ENCODE measurements at regions of chr11 and their contacts with region 1.

Region 1: DNA sequence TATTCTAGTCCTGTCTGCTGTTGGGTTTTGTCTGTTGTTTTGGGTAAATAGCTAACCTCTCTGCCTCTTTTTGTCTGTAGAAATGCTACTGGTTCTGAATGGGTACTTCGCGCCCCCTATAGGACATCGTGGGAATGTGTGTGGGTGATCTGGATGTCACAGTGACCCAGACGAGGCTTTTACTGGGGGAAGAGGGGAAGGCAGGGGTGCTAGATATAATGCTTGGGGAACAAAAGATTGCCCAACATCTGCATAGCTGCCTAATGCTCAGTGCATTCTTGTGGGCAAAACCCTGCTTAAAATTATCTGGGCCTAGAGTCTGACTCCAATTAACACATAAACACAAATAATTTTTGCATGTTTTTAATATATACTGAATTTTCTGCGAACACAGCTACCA is 57.7 kb downstream of the BMAL1 start:
- DNase-seq: peak; percentile 83
- ATAC-seq: peak; percentile 54
- H3K4me3 Mint-ChIP-seq: no peak overlapping the region
- H3K27ac Mint-ChIP-seq: no peak overlapping the region
- H3K4me1 Mint-ChIP-seq: peaks cover 71% of the 10 kb centered on the region
- H3K27me3 Mint-ChIP-seq: no peaks in the 10 kb centered on the region

Region 2: DNA sequence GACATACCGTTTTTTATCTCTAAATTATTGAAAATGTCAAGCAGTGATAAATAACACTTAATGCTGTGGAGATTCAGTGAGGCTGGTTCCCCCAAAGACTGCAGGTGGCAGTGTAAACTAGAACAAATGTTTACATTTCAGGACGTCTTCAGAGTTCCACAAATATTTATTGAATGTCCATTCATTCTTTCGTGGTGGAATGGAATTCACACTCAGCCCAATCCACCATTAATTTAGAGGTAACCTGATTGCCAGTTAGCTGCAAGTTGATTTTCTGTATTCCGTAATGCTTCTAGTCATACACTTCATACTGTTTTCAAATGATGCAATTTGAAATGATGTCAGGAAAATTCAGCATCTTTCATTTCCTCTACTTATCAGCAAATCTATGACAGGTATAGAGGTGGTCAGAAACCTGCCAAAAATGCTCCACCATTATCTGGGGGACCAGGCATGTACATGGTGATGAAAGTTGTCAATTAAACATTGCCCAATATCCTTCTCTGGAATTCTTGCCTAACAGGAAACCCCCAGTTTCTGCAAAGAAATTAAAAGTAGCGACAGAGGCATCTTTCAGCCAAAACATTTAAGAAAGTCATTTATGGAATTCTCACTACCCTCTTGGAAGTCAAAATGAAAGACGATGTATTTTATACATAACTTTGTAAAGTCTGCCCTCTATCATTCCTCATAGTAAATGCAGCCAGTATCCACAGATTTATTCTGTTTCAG is 152.1 kb before region 1 on chr11:
- CTCF ChIA-PET with region 1: interaction called, 17 read pairs
- POLR2A ChIA-PET with region 1: no interaction called
- DNase-seq: peak; percentile 37
- ATAC-seq: no peak
- H3K4me3 Mint-ChIP-seq: peak overlapping the region; percentile 17
- H3K27ac Mint-ChIP-seq: no peak overlapping the region
- H3K4me1 Mint-ChIP-seq: peaks cover 5% of the 10 kb centered on the region
- H3K27me3 Mint-ChIP-seq: peaks cover 14% of the 10 kb centered on the region

Region 3: DNA sequence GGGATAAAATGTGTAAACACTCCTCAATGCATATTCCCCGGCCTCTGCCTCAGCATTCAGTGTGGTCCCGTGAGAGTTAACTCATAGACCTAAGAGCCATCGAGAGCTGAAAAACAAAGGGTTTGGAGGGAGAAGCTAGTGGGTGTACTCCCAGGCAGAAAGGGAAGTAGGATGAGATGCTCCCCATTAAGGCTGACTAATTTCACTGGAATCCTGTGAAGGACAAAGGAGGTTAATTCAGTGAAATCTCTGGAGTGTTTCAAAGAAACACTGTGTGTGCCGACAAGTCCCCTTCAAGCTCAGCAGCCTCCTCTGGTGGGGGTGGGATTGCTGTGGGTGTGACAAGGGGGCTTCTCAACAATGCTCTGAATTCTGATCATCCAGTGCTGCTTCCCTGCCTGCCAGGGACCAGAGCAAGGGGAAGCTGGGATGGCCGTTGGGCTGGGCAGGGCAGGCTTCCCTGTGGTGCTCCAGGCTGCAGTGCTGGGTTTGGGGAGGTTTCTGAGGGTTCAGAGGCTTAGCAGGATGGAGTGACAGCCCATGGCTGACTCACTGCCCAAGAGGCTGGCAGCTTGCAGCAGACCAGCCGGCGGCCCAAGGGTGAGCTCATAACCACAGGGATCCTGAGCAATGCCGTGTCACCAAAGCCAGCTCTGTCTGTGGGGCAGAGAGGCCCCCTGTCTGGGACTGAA is 119.2 kb before region 1 on chr11:
- CTCF ChIA-PET with region 1: interaction called, 44 read pairs
- POLR2A ChIA-PET with region 1: no interaction called
- DNase-seq: no peak
- ATAC-seq: no peak
- H3K4me3 Mint-ChIP-seq: no peak overlapping the region
- H3K27ac Mint-ChIP-seq: no peak overlapping the region
- H3K4me1 Mint-ChIP-seq: peaks cover 3% of the 10 kb centered on the region
- H3K27me3 Mint-ChIP-seq: peaks cover 10% of the 10 kb centered on the region

Region 4: GRCh38 chr11:13249996-13250395 is 85.3 kb before region 1 on chr11:
- CTCF ChIA-PET with region 1: interaction called, 47 read pairs
- POLR2A ChIA-PET with region 1: no interaction called
- DNase-seq: no peak
- ATAC-seq: no peak
- H3K4me3 Mint-ChIP-seq: no peak overlapping the region
- H3K27ac Mint-ChIP-seq: no peak overlapping the region
- H3K4me1 Mint-ChIP-seq: no peaks in the 10 kb centered on the region
- H3K27me3 Mint-ChIP-seq: peaks cover 20% of the 10 kb centered on the region

Region 5: DNA sequence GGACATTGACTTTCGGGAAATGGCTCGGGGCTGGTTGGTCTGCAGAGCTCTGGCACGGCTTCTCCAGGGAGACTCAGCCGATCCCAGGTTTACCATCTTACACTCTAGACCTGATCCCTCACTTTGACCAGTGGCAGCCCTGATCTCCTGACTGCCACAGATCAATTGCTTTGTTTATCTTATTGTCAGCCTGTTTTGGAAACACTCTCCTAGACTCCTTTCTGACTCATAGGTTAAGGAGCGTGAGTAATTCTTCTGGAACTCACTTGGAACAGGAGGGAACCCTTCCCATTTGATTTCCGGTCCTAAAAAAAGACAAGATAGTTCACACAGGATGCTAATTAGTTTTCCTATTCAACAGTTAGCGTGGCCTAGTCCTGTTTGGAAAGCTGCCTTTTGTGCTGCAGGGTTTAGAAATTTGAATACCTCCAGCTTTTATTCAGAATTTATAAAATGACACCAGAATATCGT is 73.7 kb before region 1 on chr11:
- CTCF ChIA-PET with region 1: interaction called, 27 read pairs
- POLR2A ChIA-PET with region 1: interaction called, 3 read pairs
- DNase-seq: no peak
- ATAC-seq: no peak
- H3K4me3 Mint-ChIP-seq: no peak overlapping the region
- H3K27ac Mint-ChIP-seq: no peak overlapping the region
- H3K4me1 Mint-ChIP-seq: peaks cover 10% of the 10 kb centered on the region
- H3K27me3 Mint-ChIP-seq: peaks cover 39% of the 10 kb centered on the region

Region 6: DNA sequence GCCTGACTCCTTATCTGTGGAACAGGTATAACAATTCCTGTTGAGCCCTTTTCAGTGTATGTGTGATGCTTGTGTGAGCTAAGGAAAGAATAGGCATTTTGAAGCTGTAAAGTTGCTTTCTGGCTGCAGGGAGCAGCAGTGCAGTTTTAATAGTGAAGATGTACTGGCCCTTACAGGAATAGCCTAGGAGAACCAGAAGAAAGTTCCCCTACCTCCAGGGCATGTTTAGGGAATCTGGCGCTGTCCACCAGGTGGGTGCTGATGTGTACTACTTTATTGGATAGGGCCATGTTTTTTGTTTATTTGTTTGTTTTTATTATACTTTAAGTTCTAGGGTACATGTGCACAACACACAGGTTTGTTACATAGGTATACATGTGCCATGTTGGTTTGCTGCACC is 46.2 kb before region 1 on chr11:
- CTCF ChIA-PET with region 1: interaction called, 55 read pairs
- POLR2A ChIA-PET with region 1: interaction called, 6 read pairs
- DNase-seq: no peak
- ATAC-seq: no peak
- H3K4me3 Mint-ChIP-seq: no peak overlapping the region
- H3K27ac Mint-ChIP-seq: no peak overlapping the region
- H3K4me1 Mint-ChIP-seq: peaks cover 81% of the 10 kb centered on the region
- H3K27me3 Mint-ChIP-seq: no peaks in the 10 kb centered on the region

Region 7: DNA sequence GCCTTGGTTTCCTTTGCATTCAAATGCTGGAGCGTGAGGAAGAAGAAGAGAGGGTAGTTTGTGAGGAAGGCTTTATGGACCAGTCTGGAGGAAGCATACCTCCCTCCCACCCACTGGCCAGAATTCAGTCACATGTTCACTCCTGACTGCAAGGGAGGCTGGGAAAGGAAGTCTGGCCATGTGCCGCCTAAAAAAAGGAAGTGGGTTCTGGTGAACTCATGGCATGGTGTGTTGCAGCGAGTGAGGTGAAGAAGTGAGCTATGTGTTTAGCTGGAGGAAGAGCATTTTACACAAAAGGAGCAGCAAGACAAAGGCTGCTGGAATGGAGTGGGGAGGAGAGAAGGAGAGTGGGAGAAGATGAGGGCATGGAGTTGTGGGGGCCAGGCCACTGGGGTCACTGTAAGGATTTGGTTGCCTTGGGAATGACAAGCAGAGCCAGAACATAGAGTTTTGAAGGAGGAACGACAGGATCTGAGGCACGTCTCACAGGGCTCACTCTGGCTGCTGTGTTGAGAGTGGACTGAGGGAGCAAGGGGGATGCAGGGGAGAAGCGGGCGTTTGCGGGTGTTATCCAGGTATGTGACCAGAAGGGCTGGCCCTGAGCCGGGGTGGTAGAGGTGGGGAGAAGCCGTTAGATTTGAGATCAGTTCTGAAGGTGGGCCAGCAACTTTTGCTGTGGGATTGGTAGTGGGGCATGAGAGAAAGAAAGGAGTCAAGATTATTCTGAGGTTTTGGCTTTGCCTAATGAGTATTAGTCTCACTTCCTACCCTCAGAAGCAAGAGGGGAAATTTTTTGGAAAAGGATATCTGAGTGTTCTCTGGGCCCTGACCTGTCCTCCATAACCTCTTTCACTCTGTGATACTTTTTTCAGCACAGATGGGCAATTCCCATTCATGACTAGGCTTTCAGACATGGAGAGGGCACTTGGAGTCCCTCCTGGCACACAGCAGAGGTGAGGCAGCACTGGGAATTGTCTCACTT is 31.4 kb before region 1 on chr11:
- CTCF ChIA-PET with region 1: interaction called, 17 read pairs
- POLR2A ChIA-PET with region 1: interaction called, 9 read pairs
- DNase-seq: peak; percentile 38
- ATAC-seq: peak; percentile 47
- H3K4me3 Mint-ChIP-seq: no peak overlapping the region
- H3K27ac Mint-ChIP-seq: peak overlapping the region; percentile 77
- H3K4me1 Mint-ChIP-seq: peaks cover 22% of the 10 kb centered on the region
- H3K27me3 Mint-ChIP-seq: no peaks in the 10 kb centered on the region

Region 8: DNA sequence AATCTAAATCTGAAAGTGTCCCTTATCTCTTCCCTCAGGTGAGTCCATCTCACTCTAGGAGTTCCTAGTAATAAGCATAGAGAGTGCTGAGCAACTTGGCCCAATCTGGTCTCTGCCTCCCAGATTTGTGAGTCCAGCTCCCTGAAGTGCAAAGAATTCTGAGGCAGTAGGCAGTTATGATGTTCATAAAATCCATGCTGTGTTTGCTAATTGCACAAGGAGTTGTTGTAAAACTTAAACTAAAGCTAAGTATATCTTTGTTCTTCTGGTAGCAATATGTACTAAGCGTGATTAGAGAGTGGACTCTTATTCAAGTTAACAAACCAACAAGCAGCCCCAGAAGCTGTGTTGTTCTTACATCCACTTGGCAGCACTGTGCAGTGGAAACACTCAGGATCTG is 168.1 kb after region 1 on chr11:
- CTCF ChIA-PET with region 1: no interaction called
- POLR2A ChIA-PET with region 1: no interaction called
- DNase-seq: no peak
- ATAC-seq: no peak
- H3K4me3 Mint-ChIP-seq: no peak overlapping the region
- H3K27ac Mint-ChIP-seq: no peak overlapping the region
- H3K4me1 Mint-ChIP-seq: no peaks in the 10 kb centered on the region
- H3K27me3 Mint-ChIP-seq: peaks cover 9% of the 10 kb centered on the region

Measured in activated CD8-positive, alpha-beta T cell treated with anti-CD3 and anti-CD28 coated beads, Interleukin-2, amount 10 ng/mL, durations not matched to agents 7 days and 5 days (primary cell).